ENCODE measurements at regions of chr1 and their contacts with region 1.

Region 1: GRCh38 chr1:159077120-159077961 is 775 bp upstream of the AIM2 start:
- DNase-seq: peak; percentile 100
- H3K4me3 Mint-ChIP-seq: peak overlapping the region; percentile 95
- H3K27ac Mint-ChIP-seq: peak overlapping the region; percentile 97
- H3K4me1 Mint-ChIP-seq: peaks cover 52% of the 10 kb centered on the region
- H3K27me3 Mint-ChIP-seq: no peaks in the 10 kb centered on the region

Region 2: GRCh38 chr1:158819461-158820443 is 257.6 kb before region 1 on chr1:
- CTCF ChIA-PET with region 1: interaction called, 3 read pairs
- POLR2A ChIA-PET with region 1: interaction called, 12 read pairs
- intact Hi-C with region 1: loop called (anchors 2 kb)
- DNase-seq: peak; percentile 40
- H3K4me3 Mint-ChIP-seq: peak overlapping the region; percentile 46
- H3K27ac Mint-ChIP-seq: peak overlapping the region; percentile 71
- H3K4me1 Mint-ChIP-seq: peaks cover 22% of the 10 kb centered on the region
- H3K27me3 Mint-ChIP-seq: peaks cover 2% of the 10 kb centered on the region

Region 3: DNA sequence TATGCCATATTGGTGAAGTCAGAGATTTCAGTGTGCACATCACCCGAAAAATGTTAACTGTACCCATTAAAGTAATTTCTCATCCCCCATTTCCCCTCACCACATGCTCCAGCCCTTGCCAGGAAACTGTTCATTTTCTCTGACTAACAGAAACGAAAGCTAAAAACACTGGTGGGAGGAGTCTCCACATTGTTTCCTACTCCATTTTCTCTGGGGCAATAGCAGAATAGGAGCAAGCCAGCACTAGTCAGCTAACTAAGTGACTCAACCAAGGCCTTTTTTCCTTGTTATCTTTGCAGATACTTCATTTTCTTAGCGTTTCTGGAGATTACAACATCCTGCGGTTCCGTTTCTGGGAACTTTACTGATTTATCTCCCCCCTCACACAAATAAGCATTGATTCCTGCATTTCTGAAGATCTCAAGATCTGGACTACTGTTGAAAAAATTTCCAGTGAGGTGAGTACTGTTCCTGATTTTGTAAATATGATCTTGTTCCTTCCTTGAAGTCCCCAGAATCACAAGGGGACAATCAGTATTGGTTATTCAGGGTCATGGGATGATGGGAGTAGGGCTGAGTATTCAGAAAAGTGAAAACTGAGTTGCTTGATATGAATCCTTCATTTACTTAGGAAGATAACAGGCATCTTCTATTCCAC is 67.5 kb before region 1 on chr1 and contains the start of gene IFI16:
- CTCF ChIA-PET with region 1: interaction called, 16 read pairs
- POLR2A ChIA-PET with region 1: interaction called, 153 read pairs
- intact Hi-C with region 1: loop called (anchors 1 kb)
- DNase-seq: peak; percentile 77
- H3K4me3 Mint-ChIP-seq: peak within 1 kb of the TSS; percentile 90
- H3K27ac Mint-ChIP-seq: peak within 1 kb of the TSS; percentile 100
- H3K4me1 Mint-ChIP-seq: peaks cover 51% of the 10 kb centered on the region
- H3K27me3 Mint-ChIP-seq: no peaks in the 10 kb centered on the region
- total RNA-seq, gene IFI16: 215 to 220 TPM

Region 4: DNA sequence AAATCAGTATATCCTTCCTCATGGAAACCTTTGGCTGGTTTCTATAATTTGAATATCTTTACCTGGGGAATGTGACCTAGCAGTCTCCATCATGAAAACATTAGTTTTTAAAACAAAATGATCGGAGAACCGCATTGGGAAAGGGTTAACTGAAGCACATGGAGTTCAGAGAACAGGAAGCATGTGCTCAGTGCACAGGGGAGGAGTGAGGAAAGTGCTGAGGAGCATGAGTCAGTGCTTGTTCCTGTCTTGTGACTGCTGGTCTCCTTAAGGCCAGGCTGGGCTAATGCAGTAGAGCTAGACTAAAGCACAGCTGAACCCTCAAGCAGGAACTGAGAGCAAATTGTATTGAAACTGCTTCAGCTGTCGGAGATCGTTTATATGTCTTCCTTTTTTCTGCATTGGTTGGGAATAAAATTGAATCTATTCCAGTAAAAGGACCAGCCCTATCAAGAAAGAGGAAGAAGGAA is 61.9 kb before region 1 on chr1:
- CTCF ChIA-PET with region 1: interaction called, 16 read pairs
- POLR2A ChIA-PET with region 1: interaction called, 153 read pairs
- intact Hi-C with region 1: loop called (anchors 1 kb)
- DNase-seq: peak; percentile 85
- H3K4me3 Mint-ChIP-seq: peak overlapping the region; percentile 96
- H3K27ac Mint-ChIP-seq: peak overlapping the region; percentile 100
- H3K4me1 Mint-ChIP-seq: peaks cover 56% of the 10 kb centered on the region
- H3K27me3 Mint-ChIP-seq: no peaks in the 10 kb centered on the region

Region 5: DNA sequence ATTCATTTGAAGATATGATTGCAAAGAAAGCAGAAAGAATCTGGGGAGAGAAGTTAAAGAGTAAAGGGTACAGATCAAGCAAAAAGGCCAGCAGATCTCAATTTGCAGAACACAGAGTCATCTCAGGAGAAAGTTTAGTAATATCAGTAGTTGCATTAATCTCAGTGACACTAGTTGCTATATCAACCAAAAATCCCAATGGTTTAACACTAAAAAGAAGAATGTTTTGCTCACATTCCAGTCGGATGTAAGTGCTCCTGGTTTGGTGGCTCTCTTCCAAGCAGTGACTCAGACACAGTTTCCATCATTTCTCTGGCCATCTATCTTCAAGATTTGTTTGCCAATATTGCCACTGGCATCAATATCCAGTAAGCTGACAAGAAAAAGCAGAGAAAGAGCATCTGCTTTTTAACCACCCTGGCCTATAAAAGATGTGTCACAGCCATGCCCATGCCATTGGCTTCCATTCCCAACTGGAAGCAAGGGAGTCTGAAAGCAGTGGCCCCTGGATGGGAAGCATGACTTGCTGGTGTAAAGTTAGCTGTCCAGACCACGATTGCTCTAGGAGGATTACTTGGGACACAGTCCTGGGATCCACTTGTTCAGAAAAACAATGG is 44.8 kb after region 1 on chr1:
- CTCF ChIA-PET with region 1: no interaction called
- POLR2A ChIA-PET with region 1: interaction called, 5 read pairs
- intact Hi-C with region 1: loop called (anchors 1 kb)
- DNase-seq: peak; percentile 13
- H3K4me3 Mint-ChIP-seq: no peak overlapping the region
- H3K27ac Mint-ChIP-seq: no peak overlapping the region
- H3K4me1 Mint-ChIP-seq: peaks cover 18% of the 10 kb centered on the region
- H3K27me3 Mint-ChIP-seq: peaks cover 26% of the 10 kb centered on the region

Region 6: DNA sequence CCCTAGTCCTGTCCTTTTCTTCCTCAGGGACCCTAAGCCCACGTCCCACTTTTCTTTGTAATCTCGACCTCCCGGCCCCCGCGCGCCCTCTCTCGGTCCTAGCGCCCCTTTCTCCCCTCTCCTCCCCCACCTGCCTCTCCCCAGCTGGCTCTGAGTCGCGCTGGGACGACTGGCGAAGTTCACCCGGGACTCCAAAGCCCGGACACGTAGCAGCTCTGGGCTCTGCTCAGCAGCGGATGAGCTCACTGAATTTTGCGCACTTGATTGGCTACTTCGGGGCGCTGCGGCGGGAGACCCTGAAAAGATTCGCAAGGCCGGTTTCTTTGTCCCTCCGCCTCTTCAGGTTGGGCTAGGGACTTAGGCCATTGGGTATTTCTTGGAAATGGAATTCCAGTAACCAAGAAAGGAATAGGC is 111.0 kb after region 1 on chr1:
- CTCF ChIA-PET with region 1: no interaction called
- POLR2A ChIA-PET with region 1: no interaction called
- intact Hi-C with region 1: no loop called
- DNase-seq: peak; percentile 26
- H3K4me3 Mint-ChIP-seq: no peak overlapping the region
- H3K27ac Mint-ChIP-seq: no peak overlapping the region
- H3K4me1 Mint-ChIP-seq: peaks cover 12% of the 10 kb centered on the region
- H3K27me3 Mint-ChIP-seq: peaks cover 50% of the 10 kb centered on the region